ENCODE measurements at regions of chr1 and their contacts with region 1.

Region 1: DNA sequence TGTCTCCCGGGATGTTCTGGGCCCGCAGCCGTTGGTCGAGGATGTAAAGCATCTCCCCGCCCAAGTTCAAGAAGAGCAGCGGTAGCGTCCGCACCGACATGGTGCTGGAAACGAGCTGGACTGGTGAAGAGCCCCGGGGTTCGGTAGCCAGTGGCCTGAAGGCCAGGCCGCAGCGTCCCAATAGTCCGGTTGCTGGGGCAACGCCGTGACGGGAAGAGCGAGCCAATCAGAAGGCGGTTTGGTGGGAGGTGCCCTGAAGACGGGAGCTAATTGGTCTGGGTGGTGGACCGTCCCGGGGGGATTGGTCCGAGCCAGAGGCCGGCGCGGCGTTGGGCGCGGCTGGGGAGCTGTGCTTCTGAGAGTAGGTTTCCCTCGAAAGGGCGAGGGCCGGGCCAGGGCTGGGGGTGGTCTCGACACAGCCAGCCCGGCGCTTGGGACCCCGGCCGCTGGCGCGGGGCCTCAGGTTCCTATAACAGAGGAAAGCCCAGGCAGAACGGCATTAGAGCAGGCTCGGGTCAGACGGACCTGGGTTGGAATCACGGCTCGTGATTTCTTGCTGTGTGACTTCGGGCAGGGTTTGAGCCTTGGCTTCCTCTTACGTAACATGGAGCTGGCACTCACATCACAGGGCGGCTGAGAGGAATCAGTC is at the start of gene OSCP1:
- DNase-seq: peak; percentile 73 to 88 (median 83)
- ATAC-seq: peak; percentile 98
- H3K4me3 ChIP-seq: peak within 1 kb of the TSS; percentile 93
- H3K4me3 Mint-ChIP-seq: peak within 1 kb of the TSS; percentile 88 to 98 (median 92)
- H3K27ac ChIP-seq: peak within 1 kb of the TSS; percentile 94
- H3K27ac Mint-ChIP-seq: peak within 1 kb of the TSS; percentile 81 to 99 (median 96)
- H3K4me1 ChIP-seq: peaks cover 0 to 10% of the 10 kb centered on the region in 2 donors
- H3K4me1 Mint-ChIP-seq: peaks cover 7 to 30% (median 23%) of the 10 kb centered on the region in 7 donors
- H3K27me3 ChIP-seq: no peaks in the 10 kb centered on the region
- H3K27me3 Mint-ChIP-seq: no peaks in the 10 kb centered on the region
- total RNA-seq, gene OSCP1: 0.65 to 2.0 (median 0.93) TPM

Region 2: GRCh38 chr1:36463803-36464604 is 13.6 kb after region 1 on chr1 and contains the start of gene MRPS15:
- CTCF ChIA-PET with region 1: no interaction called
- POLR2A ChIA-PET with region 1: interaction called, 28 read pairs
- intact Hi-C with region 1: loop called (anchors 1 kb)
- DNase-seq: peak; percentile 85 to 95 (median 93)
- ATAC-seq: peak; percentile 99
- H3K4me3 ChIP-seq: peak within 1 kb of the TSS; percentile 85
- H3K4me3 Mint-ChIP-seq: peak within 1 kb of the TSS; percentile 86 to 100 (median 97)
- H3K27ac ChIP-seq: peak within 1 kb of the TSS; percentile 91
- H3K27ac Mint-ChIP-seq: peak within 1 kb of the TSS; percentile 90 to 99 (median 98)
- H3K4me1 ChIP-seq: peaks cover 7 to 13% of the 10 kb centered on the region in 2 donors
- H3K4me1 Mint-ChIP-seq: peaks cover 18 to 54% (median 43%) of the 10 kb centered on the region in 7 donors
- H3K27me3 ChIP-seq: no peaks in the 10 kb centered on the region
- H3K27me3 Mint-ChIP-seq: no peaks in the 10 kb centered on the region
- total RNA-seq, gene MRPS15: 30.2 to 84.0 (median 36.3) TPM